Activated B cell treated with CpG ODN at 0.5 μM for 24 hours (primary cell): ENCODE measurements at regions of chr16 and their contacts with region 1.

Region 1: DNA sequence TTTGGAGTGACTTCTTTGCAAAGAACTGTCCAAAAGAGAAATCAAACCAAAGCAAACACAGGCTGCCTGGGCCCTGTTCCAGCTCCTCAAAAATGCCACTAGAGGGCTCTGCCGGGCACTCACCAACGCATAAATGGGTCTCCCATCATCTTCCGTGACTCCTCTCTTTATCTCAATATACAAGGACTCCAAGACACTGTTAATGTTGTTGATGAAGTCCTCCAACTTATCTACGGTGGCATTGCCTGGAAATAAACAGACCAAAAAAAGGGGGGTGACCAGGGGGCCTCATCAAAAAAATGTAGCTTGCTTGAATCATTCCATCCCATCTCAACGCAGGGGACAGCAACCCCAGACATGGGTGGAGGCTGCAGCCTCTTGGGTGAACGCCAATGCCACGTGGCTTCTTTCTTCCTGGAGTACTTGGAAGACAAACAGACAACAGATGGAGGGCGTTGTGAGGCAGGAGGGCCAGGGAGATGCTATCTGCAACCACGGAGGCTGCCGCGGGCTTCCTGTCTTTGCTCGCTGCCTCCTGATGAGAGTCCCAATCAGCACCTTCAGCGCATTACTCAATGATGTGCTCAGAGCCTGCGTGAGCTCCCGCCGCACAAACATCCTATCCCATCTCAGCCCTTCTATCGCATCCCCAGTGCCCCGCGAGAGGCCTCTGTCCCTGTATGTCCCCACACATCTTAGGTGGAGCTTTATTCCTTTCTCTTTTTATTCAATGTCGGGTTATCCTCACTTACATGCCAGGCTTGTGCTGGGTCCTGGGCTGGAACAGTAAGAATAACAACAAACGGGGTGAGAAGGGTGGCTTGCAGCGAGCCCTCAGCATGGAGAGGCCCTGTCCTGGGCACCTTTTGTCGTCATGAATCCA is 32.0 kb downstream of the KDM8 start:
- DNase-seq: no peak
- ATAC-seq: peak; percentile 10
- H3K4me3 Mint-ChIP-seq: peak overlapping the region; percentile 73
- H3K27ac Mint-ChIP-seq: peak overlapping the region; percentile 88
- H3K4me1 Mint-ChIP-seq: peaks cover 92% of the 10 kb centered on the region
- H3K27me3 Mint-ChIP-seq: no peaks in the 10 kb centered on the region
- CTCF ChIP-seq: peak; percentile 44

Region 2: DNA sequence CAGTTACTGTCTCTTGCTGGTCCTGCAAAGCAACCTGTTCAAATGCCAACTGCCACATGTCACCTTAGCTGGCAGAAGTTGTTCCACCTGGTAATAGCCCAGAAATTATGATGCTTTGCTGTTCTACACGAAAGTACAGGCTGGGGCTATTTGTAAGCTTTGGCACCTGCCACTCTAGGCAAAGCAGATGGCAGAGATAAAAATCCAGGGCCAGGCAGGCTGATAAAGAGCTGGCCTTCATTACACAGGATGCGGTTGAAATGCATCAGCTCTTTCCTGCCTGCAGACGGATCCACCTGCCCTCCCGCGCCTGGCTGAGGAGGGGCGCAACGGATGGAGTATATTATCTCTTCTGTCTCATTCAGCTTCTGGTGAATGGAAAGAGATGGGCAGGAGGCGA is 61.3 kb before region 1 on chr16:
- CTCF ChIA-PET with region 1: interaction called, 26 read pairs
- POLR2A ChIA-PET with region 1: interaction called, 7 read pairs
- intact Hi-C with region 1: loop called (anchors 1 kb)
- DNase-seq: no peak
- ATAC-seq: peak; percentile 78
- H3K4me3 Mint-ChIP-seq: peak overlapping the region; percentile 32
- H3K27ac Mint-ChIP-seq: peak overlapping the region; percentile 76
- H3K4me1 Mint-ChIP-seq: peaks cover 53% of the 10 kb centered on the region
- H3K27me3 Mint-ChIP-seq: no peaks in the 10 kb centered on the region
- CTCF ChIP-seq: no peak

Region 3: DNA sequence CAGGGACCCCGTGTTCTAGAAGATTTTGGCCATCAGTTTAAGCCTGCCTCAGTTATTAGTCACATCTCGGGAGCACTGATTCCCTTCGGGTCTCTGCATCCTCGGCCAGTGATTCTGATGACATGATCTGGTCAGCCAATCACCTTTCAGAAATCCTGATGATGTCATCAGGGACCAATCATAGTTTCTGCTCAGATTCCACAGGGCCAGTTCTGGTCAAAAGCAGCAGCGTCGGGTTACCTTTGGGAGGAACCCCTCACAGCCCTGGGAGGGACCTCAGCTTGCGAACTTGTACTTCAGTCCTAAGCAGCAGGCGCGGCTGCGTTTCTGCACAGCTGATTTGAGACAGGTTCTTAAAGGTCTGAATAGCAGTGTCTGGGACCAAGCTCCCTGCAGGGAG is 18.0 kb before region 1 on chr16:
- CTCF ChIA-PET with region 1: no interaction called
- POLR2A ChIA-PET with region 1: no interaction called
- intact Hi-C with region 1: no loop called
- DNase-seq: no peak
- ATAC-seq: no peak
- H3K4me3 Mint-ChIP-seq: no peak overlapping the region
- H3K27ac Mint-ChIP-seq: no peak overlapping the region
- H3K4me1 Mint-ChIP-seq: peaks cover 3% of the 10 kb centered on the region
- H3K27me3 Mint-ChIP-seq: no peaks in the 10 kb centered on the region
- CTCF ChIP-seq: no peak

Region 4: DNA sequence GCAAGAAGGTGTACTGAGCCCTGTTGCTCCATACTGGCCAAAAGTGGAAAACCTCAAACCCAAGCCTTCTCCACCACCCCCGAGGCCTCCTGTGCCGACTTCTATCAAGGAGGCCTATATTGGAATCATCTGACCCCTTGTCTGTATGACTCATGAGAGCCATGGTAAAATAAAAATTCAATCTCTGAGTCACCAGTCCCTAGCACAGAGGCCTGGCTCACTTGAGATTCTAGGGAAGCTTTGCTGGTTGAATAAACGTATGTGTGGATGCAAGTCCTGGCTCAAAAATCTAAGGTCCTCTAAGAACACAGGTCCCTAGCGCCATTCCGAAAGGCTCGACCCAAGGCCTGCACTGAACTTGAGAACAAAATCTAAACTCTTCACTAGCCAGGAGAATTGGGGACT is 18.2 kb after region 1 on chr16:
- CTCF ChIA-PET with region 1: interaction called, 14 read pairs
- POLR2A ChIA-PET with region 1: interaction called, 52 read pairs
- intact Hi-C with region 1: loop called (anchors 1 kb)
- DNase-seq: no peak
- ATAC-seq: peak; percentile 40
- H3K4me3 Mint-ChIP-seq: peak overlapping the region; percentile 65
- H3K27ac Mint-ChIP-seq: peak overlapping the region; percentile 88
- H3K4me1 Mint-ChIP-seq: peaks cover 65% of the 10 kb centered on the region
- H3K27me3 Mint-ChIP-seq: no peaks in the 10 kb centered on the region
- CTCF ChIP-seq: no peak

Region 5: GRCh38 chr16:27313422-27314160 is 78.3 kb after region 1 on chr16 and contains the start of gene IL4R:
- CTCF ChIA-PET with region 1: interaction called, 76 read pairs
- POLR2A ChIA-PET with region 1: interaction called, 90 read pairs
- intact Hi-C with region 1: loop called (anchors 1 kb)
- DNase-seq: peak; percentile 77
- ATAC-seq: peak; percentile 49
- H3K4me3 Mint-ChIP-seq: peak within 1 kb of the TSS; percentile 88
- H3K27ac Mint-ChIP-seq: peak within 1 kb of the TSS; percentile 90
- H3K4me1 Mint-ChIP-seq: peaks cover 76% of the 10 kb centered on the region
- H3K27me3 Mint-ChIP-seq: no peaks in the 10 kb centered on the region
- CTCF ChIP-seq: no peak
- total RNA-seq, gene IL4R: 176 and 202 TPM in 2 replicates

Region 6: GRCh38 chr16:27401768-27402568 is 166.7 kb after region 1 on chr16 and contains the start of gene IL21R:
- CTCF ChIA-PET with region 1: interaction called, 11 read pairs
- POLR2A ChIA-PET with region 1: interaction called, 39 read pairs
- intact Hi-C with region 1: no loop called
- DNase-seq: peak; percentile 76
- ATAC-seq: peak; percentile 53
- H3K4me3 Mint-ChIP-seq: peak within 1 kb of the TSS; percentile 99
- H3K27ac Mint-ChIP-seq: peak within 1 kb of the TSS; percentile 96
- H3K4me1 Mint-ChIP-seq: peaks cover 88% of the 10 kb centered on the region
- H3K27me3 Mint-ChIP-seq: no peaks in the 10 kb centered on the region
- CTCF ChIP-seq: no peak
- total RNA-seq, gene IL21R: 144 and 167 TPM in 2 replicates

Region 7: DNA sequence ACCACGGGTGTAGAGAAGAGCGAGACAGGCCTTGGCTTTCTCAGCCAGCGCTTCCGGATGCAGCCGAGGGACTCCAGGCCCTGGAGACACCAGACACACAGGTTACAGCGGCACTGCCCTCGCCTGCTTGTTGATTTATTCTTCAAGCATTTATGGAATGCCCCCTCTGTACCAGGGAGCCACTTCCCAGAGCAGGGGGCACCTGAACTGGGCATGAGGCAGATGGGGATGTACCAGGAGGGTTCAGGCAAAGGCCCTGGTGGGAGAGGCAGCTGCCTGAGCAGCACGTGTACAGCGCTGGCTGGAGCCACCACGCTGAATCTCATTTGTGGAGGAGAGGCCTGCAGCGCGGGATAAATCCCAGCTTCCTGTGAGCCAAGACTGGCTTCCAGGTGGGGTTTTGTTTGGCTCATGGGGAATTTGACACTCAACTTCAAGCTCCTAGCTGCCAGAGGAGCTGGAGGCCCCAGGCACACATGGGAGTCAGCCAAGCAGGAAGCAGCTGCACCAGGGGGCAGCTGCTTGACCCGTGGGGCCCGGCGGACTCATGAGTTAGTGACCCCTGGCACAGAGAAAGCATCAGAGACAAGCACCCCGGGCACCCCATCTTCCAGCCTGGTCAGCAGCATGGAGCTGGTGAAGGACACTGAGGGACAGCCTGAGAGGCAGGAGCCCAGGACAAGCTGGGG is 226.3 kb after region 1 on chr16:
- CTCF ChIA-PET with region 1: interaction called, 4 read pairs
- POLR2A ChIA-PET with region 1: no interaction called
- intact Hi-C with region 1: loop called (anchors 1 kb)
- DNase-seq: no peak
- ATAC-seq: no peak
- H3K4me3 Mint-ChIP-seq: no peak overlapping the region
- H3K27ac Mint-ChIP-seq: no peak overlapping the region
- H3K4me1 Mint-ChIP-seq: peaks cover 8% of the 10 kb centered on the region
- H3K27me3 Mint-ChIP-seq: no peaks in the 10 kb centered on the region
- CTCF ChIP-seq: no peak

Region 8: GRCh38 chr16:27579087-27579980 is 344.0 kb after region 1 on chr16:
- CTCF ChIA-PET with region 1: no interaction called
- POLR2A ChIA-PET with region 1: no interaction called
- intact Hi-C with region 1: no loop called
- DNase-seq: no peak
- ATAC-seq: no peak
- H3K4me3 Mint-ChIP-seq: no peak overlapping the region
- H3K27ac Mint-ChIP-seq: no peak overlapping the region
- H3K4me1 Mint-ChIP-seq: no peaks in the 10 kb centered on the region
- H3K27me3 Mint-ChIP-seq: no peaks in the 10 kb centered on the region
- CTCF ChIP-seq: no peak

Region 9: GRCh38 chr16:27591838-27592237 is 356.5 kb after region 1 on chr16:
- CTCF ChIA-PET with region 1: no interaction called
- POLR2A ChIA-PET with region 1: no interaction called
- intact Hi-C with region 1: no loop called
- DNase-seq: no peak
- ATAC-seq: no peak
- H3K4me3 Mint-ChIP-seq: no peak overlapping the region
- H3K27ac Mint-ChIP-seq: no peak overlapping the region
- H3K4me1 Mint-ChIP-seq: peaks cover 4% of the 10 kb centered on the region
- H3K27me3 Mint-ChIP-seq: no peaks in the 10 kb centered on the region
- CTCF ChIP-seq: no peak